T-cell (primary cell): ENCODE measurements at regions of chr1 and their contacts with region 1.

Region 1: GRCh38 chr1:197103300-197103699 is 36.2 kb upstream of the F13B start:
- DNase-seq: no peak
- ATAC-seq: no peak
- H3K4me3 ChIP-seq: no peak overlapping the region
- H3K4me3 Mint-ChIP-seq: peak overlapping the region in 1 of 3 donors; percentile 58
- H3K27ac ChIP-seq: no peak overlapping the region
- H3K27ac Mint-ChIP-seq: no peak overlapping the region
- H3K4me1 ChIP-seq: peaks cover 0 to 10% of the 10 kb centered on the region in 2 experiments
- H3K4me1 Mint-ChIP-seq: peaks cover 32 to 40% (median 32%) of the 10 kb centered on the region in 3 donors
- H3K27me3 ChIP-seq: no peaks in the 10 kb centered on the region
- H3K27me3 Mint-ChIP-seq: no peaks in the 10 kb centered on the region

Region 2: GRCh38 chr1:197081159-197081753 is 22.0 kb before region 1 on chr1:
- CTCF ChIA-PET with region 1: no interaction called
- POLR2A ChIA-PET with region 1: no interaction called
- DNase-seq: no peak
- ATAC-seq: no peak
- H3K4me3 ChIP-seq: no peak overlapping the region
- H3K4me3 Mint-ChIP-seq: no peak overlapping the region
- H3K27ac ChIP-seq: no peak overlapping the region
- H3K27ac Mint-ChIP-seq: no peak overlapping the region
- H3K4me1 ChIP-seq: no peaks in the 10 kb centered on the region
- H3K4me1 Mint-ChIP-seq: no peaks in the 10 kb centered on the region
- H3K27me3 ChIP-seq: no peaks in the 10 kb centered on the region
- H3K27me3 Mint-ChIP-seq: no peaks in the 10 kb centered on the region

Region 3: DNA sequence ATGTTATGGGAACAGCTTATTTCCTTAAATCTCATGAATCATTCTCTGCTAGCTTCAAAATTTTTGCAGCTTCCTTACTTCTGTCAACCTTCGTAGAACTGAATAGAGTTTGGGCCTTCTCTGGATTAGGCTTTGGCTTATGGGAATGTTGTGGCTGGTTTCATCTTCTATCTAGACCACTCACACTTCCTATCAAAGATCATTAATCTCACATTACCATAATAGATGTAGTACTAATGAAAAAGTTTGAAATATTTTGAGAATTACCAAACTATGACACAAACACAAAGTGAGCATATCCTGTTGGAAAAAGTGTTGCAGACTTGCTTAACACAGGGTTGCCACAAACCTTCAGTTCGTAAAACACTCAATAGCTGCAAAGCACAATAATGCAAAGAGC is 12.9 kb after region 1 on chr1:
- CTCF ChIA-PET with region 1: no interaction called
- POLR2A ChIA-PET with region 1: interaction called in 1 of 2 experiments, 13 read pairs
- DNase-seq: no peak
- ATAC-seq: no peak
- H3K4me3 ChIP-seq: no peak overlapping the region
- H3K4me3 Mint-ChIP-seq: no peak overlapping the region
- H3K27ac ChIP-seq: no peak overlapping the region
- H3K27ac Mint-ChIP-seq: no peak overlapping the region
- H3K4me1 ChIP-seq: no peaks in the 10 kb centered on the region
- H3K4me1 Mint-ChIP-seq: no peaks in the 10 kb centered on the region
- H3K27me3 ChIP-seq: no peaks in the 10 kb centered on the region
- H3K27me3 Mint-ChIP-seq: no peaks in the 10 kb centered on the region

Region 4: DNA sequence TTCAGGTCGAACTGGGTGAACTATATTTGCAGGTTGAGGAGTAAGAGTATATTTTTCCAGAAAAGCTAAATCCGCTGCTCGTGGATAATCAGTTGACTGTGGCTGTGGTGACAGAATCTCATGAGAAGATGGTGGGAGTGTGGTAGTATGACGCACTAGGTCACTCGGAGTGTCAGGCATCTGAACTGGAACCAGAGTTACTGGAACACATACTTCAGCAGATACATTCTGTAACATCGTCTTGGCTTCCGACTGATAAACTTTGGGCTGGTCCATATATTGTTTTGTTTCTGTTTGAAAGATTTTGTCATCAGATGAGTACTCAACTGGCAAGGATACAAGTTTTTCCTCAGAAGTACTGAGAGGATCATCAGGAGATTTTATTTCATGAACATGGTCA is 56.2 kb after region 1 on chr1:
- CTCF ChIA-PET with region 1: no interaction called
- POLR2A ChIA-PET with region 1: no interaction called
- DNase-seq: no peak
- ATAC-seq: no peak
- H3K4me3 ChIP-seq: no peak overlapping the region
- H3K4me3 Mint-ChIP-seq: no peak overlapping the region
- H3K27ac ChIP-seq: no peak overlapping the region
- H3K27ac Mint-ChIP-seq: no peak overlapping the region
- H3K4me1 ChIP-seq: no peaks in the 10 kb centered on the region
- H3K4me1 Mint-ChIP-seq: peaks cover 0 to 8% (median 4%) of the 10 kb centered on the region in 3 donors
- H3K27me3 ChIP-seq: no peaks in the 10 kb centered on the region
- H3K27me3 Mint-ChIP-seq: no peaks in the 10 kb centered on the region

Region 5: GRCh38 chr1:197787052-197787451 is 683.8 kb after region 1 on chr1:
- CTCF ChIA-PET with region 1: no interaction called
- POLR2A ChIA-PET with region 1: no interaction called
- DNase-seq: no peak
- ATAC-seq: no peak
- H3K4me3 ChIP-seq: no peak overlapping the region
- H3K4me3 Mint-ChIP-seq: no peak overlapping the region
- H3K27ac ChIP-seq: no peak overlapping the region
- H3K27ac Mint-ChIP-seq: no peak overlapping the region
- H3K4me1 ChIP-seq: no peaks in the 10 kb centered on the region
- H3K4me1 Mint-ChIP-seq: no peaks in the 10 kb centered on the region
- H3K27me3 ChIP-seq: no peaks in the 10 kb centered on the region
- H3K27me3 Mint-ChIP-seq: no peaks in the 10 kb centered on the region